ENCODE measurements at regions of chr5 and their contacts with region 1.

Region 1: DNA sequence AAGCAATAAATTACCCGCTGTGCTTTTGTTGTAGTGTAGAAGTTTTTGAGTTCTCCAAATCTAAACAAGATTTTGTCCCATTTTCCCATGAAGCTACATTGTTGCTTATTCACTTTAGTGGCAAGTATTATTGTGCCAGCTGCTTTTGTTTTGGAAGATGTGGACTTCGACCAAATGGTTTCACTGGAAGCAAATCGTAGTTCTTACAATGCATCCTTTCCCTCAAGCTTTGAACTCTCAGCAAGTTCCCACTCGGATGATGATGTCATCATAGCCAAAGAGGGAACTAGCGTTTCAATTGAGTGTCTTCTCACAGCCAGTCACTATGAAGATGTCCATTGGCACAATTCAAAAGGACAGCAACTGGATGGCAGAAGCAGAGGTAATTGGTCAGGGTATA is 10.9 kb downstream of the MFAP3 start:
- DNase-seq: no peak
- ATAC-seq: no peak
- H3K4me3 ChIP-seq: no peak overlapping the region
- H3K27ac ChIP-seq: no peak overlapping the region
- H3K4me1 ChIP-seq: no peaks in the 10 kb centered on the region
- H3K27me3 ChIP-seq: no peaks in the 10 kb centered on the region
- CTCF ChIP-seq: no peak
- EP300 ChIP-seq: no peak
- POLR2A ChIP-seq: no peak
- RAD21 ChIP-seq: no peak

Region 2: DNA sequence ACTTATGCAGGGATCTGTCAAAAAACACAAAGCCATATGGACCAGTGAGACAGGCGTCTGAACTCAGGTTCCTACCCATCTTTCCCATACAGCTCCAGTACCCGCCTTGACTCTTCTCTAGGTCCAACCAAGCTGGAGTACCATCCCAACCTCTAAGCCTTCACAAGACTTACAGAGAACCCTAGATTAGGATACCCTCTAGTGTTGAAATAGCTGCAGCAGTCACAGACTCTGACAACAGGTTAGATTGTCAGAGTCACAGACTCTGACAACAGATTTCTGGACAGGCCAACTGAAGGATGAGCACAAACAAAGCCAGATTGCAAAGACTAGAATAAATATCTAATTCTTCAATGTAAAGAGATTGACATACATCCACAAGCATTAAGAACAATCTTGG is 293.1 kb before region 1 on chr5:
- CTCF ChIA-PET with region 1: no interaction called
- POLR2A ChIA-PET with region 1: no interaction called
- in situ Hi-C with region 1: no loop called
- intact Hi-C with region 1: no loop called
- DNase-seq: peak in 1 of 4 experiments; percentile 13
- ATAC-seq: peak; percentile 82
- H3K4me3 ChIP-seq: no peak overlapping the region
- H3K27ac ChIP-seq: no peak overlapping the region
- H3K4me1 ChIP-seq: no peaks in the 10 kb centered on the region
- H3K27me3 ChIP-seq: no peaks in the 10 kb centered on the region
- CTCF ChIP-seq: peak in 2 of 3 experiments; percentile 29 to 35; a peak in 2 of 6 replicates
- EP300 ChIP-seq: no peak
- POLR2A ChIP-seq: no peak
- RAD21 ChIP-seq: peak in 1 of 2 experiments; percentile 49; a peak in 2 of 4 replicates

Region 3: DNA sequence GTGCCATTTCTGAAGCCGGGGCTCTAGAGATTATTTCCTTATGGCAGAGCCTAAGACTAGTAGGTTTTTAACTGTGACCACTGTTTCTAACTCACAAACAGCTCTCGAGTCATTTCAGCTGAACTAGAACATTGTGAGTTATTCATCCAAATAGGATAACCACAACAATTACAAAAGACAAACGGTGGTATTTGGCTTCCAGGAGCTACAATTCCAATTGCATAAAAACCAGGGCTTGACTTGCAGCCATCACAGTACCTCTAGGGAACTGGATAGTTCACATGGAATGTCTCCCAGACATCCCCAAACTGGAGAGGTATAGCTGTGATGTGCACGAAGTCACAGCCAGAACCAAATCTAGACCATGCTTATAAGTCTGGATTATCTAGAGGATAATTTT is 235.7 kb before region 1 on chr5:
- CTCF ChIA-PET with region 1: no interaction called
- POLR2A ChIA-PET with region 1: no interaction called
- in situ Hi-C with region 1: no loop called
- intact Hi-C with region 1: no loop called
- DNase-seq: no peak
- ATAC-seq: no peak
- H3K4me3 ChIP-seq: no peak overlapping the region
- H3K27ac ChIP-seq: no peak overlapping the region
- H3K4me1 ChIP-seq: no peaks in the 10 kb centered on the region
- H3K27me3 ChIP-seq: no peaks in the 10 kb centered on the region
- CTCF ChIP-seq: no peak
- EP300 ChIP-seq: no peak
- POLR2A ChIP-seq: no peak
- RAD21 ChIP-seq: no peak

Region 4: DNA sequence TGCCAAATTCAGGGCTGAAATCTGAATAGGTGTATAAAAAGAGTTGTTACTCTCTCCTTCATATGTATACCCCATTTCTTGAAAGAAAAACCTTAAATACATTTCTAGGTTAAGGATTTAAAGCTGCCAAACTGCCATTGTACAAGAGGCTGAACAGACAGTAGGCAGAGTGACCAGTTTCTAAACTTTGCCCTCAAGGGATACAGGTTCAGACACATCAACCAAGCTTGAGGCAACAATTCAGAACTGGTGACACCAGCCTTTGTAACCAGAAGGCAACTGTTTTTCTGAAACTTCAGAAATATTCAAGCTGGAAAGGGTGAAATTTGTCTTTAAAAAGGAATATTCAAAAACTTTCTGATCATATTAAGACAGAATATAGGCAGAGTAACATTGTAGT is 58.5 kb before region 1 on chr5:
- CTCF ChIA-PET with region 1: no interaction called
- POLR2A ChIA-PET with region 1: no interaction called
- in situ Hi-C with region 1: no loop called
- intact Hi-C with region 1: loop called (anchors 5 kb)
- DNase-seq: no peak
- ATAC-seq: no peak
- H3K4me3 ChIP-seq: no peak overlapping the region
- H3K27ac ChIP-seq: no peak overlapping the region
- H3K4me1 ChIP-seq: peaks cover 0 to 12% of the 10 kb centered on the region in 2 experiments; a peak in 2 of 5 replicates
- H3K27me3 ChIP-seq: no peaks in the 10 kb centered on the region
- CTCF ChIP-seq: no peak
- EP300 ChIP-seq: no peak
- POLR2A ChIP-seq: no peak
- RAD21 ChIP-seq: no peak

Region 5: DNA sequence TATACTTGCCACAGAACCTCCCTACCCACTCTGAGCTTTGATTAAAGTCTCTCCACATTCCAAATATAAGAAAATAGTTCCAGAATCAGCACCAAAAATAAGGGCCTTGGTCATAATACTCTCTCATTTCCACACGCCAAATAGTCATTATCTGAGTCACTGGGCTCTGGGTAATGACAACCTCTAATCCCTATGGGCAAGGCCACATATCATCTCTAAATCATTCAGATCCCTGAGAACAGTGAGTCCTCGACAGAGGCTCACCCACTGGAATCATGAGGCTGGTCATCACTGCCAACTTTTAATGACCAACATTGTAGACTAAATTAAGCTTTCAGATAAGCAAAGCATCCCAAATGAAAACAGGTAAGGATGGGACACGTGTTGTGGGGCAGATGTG is 39.0 kb before region 1 on chr5:
- CTCF ChIA-PET with region 1: no interaction called
- POLR2A ChIA-PET with region 1: no interaction called
- in situ Hi-C with region 1: no loop called
- intact Hi-C with region 1: no loop called
- DNase-seq: no peak
- ATAC-seq: no peak
- H3K4me3 ChIP-seq: no peak overlapping the region
- H3K27ac ChIP-seq: no peak overlapping the region
- H3K4me1 ChIP-seq: no peaks in the 10 kb centered on the region
- H3K27me3 ChIP-seq: no peaks in the 10 kb centered on the region
- CTCF ChIP-seq: no peak
- EP300 ChIP-seq: no peak
- POLR2A ChIP-seq: no peak
- RAD21 ChIP-seq: no peak

Region 6: DNA sequence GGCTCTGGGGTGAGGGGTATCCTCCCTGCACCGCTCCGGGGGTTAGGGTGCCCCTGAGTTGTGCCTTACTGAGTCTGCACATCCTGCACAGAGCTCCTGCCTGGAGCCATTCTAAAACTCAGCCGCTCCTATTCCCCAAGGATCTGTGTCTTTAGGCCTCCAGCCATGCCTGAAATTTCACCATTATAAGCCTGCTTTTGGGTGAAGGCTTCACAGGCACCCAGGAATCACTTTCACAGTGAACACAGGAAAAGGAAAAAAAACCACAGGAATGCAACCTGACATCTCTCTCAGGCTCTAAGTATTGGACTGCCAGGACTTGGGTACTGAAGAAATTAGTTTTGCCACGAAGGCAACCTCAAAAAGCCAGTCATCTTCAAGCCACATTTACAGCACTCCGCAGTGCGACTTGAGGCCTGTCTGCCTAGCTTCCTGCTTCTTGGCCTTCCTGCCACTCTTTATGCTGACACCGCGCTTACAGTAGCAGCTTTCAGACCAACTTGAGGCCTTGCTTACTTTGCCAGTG is 171.8 kb after region 1 on chr5:
- CTCF ChIA-PET with region 1: no interaction called
- POLR2A ChIA-PET with region 1: no interaction called
- in situ Hi-C with region 1: no loop called
- intact Hi-C with region 1: no loop called
- DNase-seq: no peak
- ATAC-seq: no peak
- H3K4me3 ChIP-seq: no peak overlapping the region
- H3K27ac ChIP-seq: no peak overlapping the region
- H3K4me1 ChIP-seq: no peaks in the 10 kb centered on the region
- H3K27me3 ChIP-seq: no peaks in the 10 kb centered on the region
- CTCF ChIP-seq: no peak
- EP300 ChIP-seq: no peak
- POLR2A ChIP-seq: no peak
- RAD21 ChIP-seq: no peak

Measured in K562 (cell line).